Prostate gland (tissue), 2 donors: ENCODE measurements at regions of chr9 and their contacts with region 1.

Region 1: DNA sequence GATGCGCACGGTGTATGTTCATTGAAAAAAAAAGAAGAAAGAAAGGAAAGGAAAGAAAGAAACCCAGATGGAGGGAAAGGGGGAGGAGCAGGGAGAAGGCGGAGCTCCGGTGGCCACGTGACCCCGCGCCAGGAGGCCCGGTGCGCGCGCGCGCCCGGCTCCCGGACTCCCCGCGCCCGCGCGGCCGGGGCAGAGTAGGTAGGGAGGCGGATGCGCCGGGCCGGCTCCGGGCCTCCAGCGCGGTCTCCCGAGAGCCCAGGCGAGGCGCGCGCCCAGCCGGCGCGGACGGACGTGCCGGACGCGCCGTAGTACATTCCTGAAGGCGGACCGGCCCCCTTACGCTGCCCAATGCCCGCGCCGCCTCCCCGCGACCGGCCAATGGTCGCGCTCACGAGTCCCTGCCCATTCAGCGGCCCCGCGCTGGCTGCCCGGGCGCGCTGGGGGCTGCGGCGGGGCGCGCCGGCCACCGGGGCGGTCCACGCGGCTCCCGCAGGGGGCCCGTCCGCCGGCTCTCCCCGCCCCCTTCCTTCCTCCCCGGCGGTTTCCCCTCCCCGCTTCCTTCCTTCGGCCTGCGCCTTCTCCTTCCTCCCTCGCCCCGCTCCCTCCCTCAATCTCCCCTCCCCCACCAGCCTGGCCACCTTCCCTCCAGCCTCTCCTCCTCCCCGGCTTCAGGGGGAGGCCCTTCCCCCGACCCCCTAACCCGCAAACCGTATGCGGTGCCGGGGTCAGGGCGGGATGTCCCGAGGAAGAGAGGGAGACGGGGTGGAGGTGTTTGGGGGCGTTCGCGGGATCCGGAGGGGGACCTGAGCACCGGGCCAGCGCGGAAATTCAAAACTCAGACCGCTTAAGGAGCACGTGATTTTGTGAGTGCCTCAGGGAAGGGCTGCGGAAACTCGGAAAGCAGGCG is 5.8 kb downstream of the PTCH1 start:
- DNase-seq: peak; percentile 92
- H3K4me3 ChIP-seq: peak overlapping the region; percentile 77 to 85
- H3K27ac ChIP-seq: peak overlapping the region; percentile 94
- H3K4me1 ChIP-seq: no peaks in the 10 kb centered on the region
- H3K27me3 ChIP-seq: no peaks in the 10 kb centered on the region
- CTCF ChIP-seq: peak in 1 of 4 experiments; percentile 3
- POLR2A ChIP-seq: peak; percentile 90

Region 2: GRCh38 chr9:95317119-95317892 is 193.7 kb before region 1 on chr9 and contains the start of gene FANCC:
- intact Hi-C with region 1: loop called (anchors 2 kb)
- DNase-seq: peak; percentile 90
- H3K4me3 ChIP-seq: peak within 1 kb of the TSS; percentile 94 to 99
- H3K27ac ChIP-seq: peak within 1 kb of the TSS; percentile 94 to 97
- H3K4me1 ChIP-seq: no peaks in the 10 kb centered on the region
- H3K27me3 ChIP-seq: no peaks in the 10 kb centered on the region
- CTCF ChIP-seq: no peak
- POLR2A ChIP-seq: no peak
- total RNA-seq, gene FANCC: 4.9 to 21.2 TPM

Region 3: DNA sequence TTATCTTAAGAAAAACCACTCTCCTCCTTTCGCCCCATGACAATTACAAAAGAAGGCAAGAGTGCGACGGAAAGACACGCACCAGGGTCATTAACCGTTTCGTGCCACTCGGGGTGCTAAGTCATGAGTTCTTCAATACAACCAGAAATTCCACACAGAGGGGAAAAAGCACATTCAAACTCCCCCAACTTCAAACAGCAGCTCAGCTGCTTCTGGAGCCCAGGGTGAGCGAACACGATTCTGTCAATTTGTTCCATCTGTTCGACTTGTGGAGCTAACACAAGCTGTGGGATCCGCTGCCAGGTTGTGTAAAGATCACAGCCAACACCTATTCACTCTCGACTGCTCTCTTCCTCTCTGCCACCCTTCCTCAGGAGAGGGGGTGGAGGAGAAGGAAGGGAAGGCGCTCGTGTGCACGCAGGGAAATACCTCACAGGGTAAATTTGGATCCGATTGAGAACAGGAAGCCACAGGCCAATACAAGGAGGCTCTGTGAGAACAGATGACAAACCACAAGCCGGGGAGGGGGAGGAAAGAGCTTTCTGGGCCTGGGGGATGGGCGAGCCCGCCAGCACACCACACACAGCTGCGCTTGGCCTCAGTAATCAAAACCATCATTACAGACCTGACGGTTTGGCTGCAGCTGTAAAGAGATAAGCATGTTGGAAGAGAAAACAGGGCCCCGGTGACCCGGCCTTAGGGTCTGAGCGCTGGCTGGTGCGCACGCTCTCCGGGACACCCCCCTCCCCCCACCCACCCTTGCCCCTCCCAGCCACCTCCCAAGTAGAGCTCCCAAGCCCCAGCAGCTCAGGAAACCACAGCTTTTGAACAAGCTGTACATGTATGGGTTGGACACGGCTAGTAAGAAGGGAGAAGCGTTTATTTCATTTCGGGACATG is 48.5 kb before region 1 on chr9:
- intact Hi-C with region 1: loop called (anchors 5 kb)
- DNase-seq: peak; percentile 65
- H3K4me3 ChIP-seq: peak overlapping the region; percentile 2 to 9
- H3K27ac ChIP-seq: peak overlapping the region; percentile 22 to 35
- H3K4me1 ChIP-seq: peaks cover 4% of the 10 kb centered on the region
- H3K27me3 ChIP-seq: no peaks in the 10 kb centered on the region
- CTCF ChIP-seq: no peak
- POLR2A ChIP-seq: no peak